ENCODE measurements at regions of chr4 and their contacts with region 1.

Region 1: DNA sequence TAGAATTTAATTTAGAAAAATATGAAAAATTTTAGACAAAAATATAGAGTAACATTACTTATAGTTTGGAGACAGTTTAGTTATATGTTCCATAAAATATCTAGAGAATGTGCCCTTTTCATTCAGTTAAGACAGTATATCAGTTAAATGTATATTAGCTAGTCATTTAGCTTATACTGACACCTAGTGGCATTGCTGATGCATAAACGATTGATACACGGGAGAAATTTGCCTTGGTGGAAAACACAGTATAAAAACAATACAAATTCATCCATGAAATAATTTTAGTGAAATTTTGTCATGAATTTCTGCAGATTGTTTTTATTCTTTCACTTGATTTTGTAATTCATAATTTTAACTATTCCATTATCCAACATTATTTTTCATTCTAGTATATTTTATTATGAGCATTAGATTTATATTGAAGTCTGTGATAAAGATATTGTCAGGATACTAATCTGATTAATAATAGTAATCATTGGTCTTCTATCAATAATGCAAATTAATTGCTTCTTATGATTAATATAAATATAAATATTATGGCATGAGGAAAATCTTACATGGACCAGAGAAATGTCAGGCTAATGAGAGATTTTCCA is 219.0 kb downstream of the TLL1 start:
- DNase-seq: peak; percentile 64
- H3K4me3 ChIP-seq: no peak overlapping the region
- H3K27ac ChIP-seq: no peak overlapping the region
- H3K4me1 ChIP-seq: no peaks in the 10 kb centered on the region
- CTCF ChIP-seq: peak; percentile 95

Region 2: GRCh38 chr4:165060942-165061341 is 1031.1 kb before region 1 on chr4:
- CTCF ChIA-PET with region 1: no interaction called
- POLR2A ChIA-PET with region 1: interaction called, 3 read pairs
- intact Hi-C with region 1: loop called (anchors 10 kb)
- DNase-seq: no peak
- H3K4me3 ChIP-seq: no peak overlapping the region
- H3K27ac ChIP-seq: no peak overlapping the region
- H3K4me1 ChIP-seq: no peaks in the 10 kb centered on the region
- CTCF ChIP-seq: peak; percentile 69

Region 3: GRCh38 chr4:165152527-165152926 is 939.5 kb before region 1 on chr4:
- CTCF ChIA-PET with region 1: no interaction called
- POLR2A ChIA-PET with region 1: no interaction called
- intact Hi-C with region 1: loop called (anchors 10 kb)
- DNase-seq: no peak
- H3K4me3 ChIP-seq: no peak overlapping the region
- H3K27ac ChIP-seq: no peak overlapping the region
- H3K4me1 ChIP-seq: no peaks in the 10 kb centered on the region
- CTCF ChIP-seq: no peak

Region 4: DNA sequence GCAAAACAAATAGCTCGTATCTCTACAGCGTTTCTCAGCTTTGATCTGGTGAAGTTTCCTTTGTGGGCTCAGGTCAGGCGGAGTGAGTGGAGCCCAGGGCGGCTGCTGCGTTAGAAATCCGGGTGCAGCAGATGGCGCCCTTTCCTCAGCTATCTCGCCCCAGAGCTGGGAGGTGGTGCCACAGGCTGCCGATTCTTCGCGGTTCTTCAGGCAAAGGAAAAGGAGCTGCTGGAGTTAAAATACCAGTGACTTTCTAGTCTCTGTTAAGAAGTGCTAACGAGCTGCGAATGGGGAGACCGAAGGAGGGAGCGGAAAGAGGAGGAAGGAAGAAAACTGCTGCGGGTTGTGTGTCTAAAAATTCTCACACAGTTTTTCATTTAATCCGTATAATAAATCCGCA is 598.7 kb before region 1 on chr4:
- CTCF ChIA-PET with region 1: no interaction called
- POLR2A ChIA-PET with region 1: no interaction called
- intact Hi-C with region 1: loop called (anchors 5 kb)
- DNase-seq: peak; percentile 38
- H3K4me3 ChIP-seq: no peak overlapping the region
- H3K27ac ChIP-seq: no peak overlapping the region
- H3K4me1 ChIP-seq: no peaks in the 10 kb centered on the region
- CTCF ChIP-seq: peak; percentile 80

Region 5: GRCh38 chr4:165537028-165537648 is 554.9 kb before region 1 on chr4:
- CTCF ChIA-PET with region 1: no interaction called
- POLR2A ChIA-PET with region 1: no interaction called
- intact Hi-C with region 1: loop called (anchors 1 kb)
- DNase-seq: peak; percentile 52
- H3K4me3 ChIP-seq: no peak overlapping the region
- H3K27ac ChIP-seq: no peak overlapping the region
- H3K4me1 ChIP-seq: no peaks in the 10 kb centered on the region
- CTCF ChIP-seq: peak; percentile 91

Region 6: DNA sequence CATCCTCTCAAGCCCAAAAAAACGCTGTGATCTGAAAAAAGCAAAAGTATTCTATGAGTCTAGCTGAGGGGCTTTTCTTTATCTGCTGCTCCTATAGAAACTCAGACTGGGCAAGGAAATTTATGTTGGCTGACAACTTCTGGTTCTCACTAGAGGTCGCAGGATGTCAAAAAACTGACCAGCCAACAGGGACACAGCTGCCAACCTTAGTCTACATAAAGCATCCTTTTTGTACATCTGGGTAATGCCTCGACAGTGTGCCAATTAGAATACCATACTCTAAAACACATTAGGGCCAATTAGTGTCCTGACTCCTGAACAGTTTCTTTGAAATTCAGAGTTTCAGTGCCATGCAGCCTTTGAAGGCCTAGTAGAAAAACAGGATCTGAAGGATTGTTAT is 227.7 kb before region 1 on chr4:
- CTCF ChIA-PET with region 1: interaction called, 3 read pairs
- POLR2A ChIA-PET with region 1: interaction called, 5 read pairs
- intact Hi-C with region 1: loop called (anchors 1 kb)
- DNase-seq: peak; percentile 43
- H3K4me3 ChIP-seq: no peak overlapping the region
- H3K27ac ChIP-seq: no peak overlapping the region
- H3K4me1 ChIP-seq: no peaks in the 10 kb centered on the region
- CTCF ChIP-seq: peak; percentile 68

Measured in OCI-LY7 (cell line).